ENCODE measurements at regions of chr22 and their contacts with region 1.

Region 1: DNA sequence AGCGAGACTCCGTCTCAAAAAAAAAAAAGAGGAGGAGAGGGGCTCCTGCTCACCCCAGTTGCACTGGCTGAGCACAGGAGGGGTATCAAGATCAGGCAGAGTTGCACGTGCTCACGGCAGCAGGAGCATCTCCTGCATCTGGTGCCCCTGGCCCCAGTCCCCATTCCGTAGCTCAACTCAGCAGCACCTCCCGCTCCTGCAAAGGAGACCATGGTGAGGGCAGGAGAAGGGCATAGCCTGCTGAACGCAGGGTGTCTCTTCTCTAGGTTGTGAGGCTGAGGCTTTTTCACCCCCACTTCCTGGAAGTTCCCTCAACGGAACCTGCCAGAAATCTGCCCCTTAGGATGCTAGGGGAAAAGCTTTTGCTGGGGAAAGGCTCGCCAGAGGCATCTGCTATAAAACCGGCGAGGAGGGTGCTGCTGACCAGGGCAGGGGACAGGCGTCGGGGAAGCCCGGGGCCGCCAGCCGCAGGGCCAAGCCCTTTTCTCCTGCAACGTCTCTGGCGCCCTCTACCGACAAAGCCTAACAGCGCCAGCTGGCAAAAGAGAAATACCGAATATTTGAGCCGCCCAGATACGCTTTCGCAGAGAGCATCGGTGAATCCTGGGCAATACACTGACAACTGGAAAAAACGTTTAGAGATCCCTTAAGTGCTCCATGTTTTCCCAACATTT is 1.0 kb upstream of the PPP6R2 start:
- DNase-seq: peak; percentile 72 to 98 (median 89)

Region 2: GRCh38 chr22:50250555-50251476 is 91.3 kb before region 1 on chr22 and contains the start of gene HDAC10:
- intact Hi-C with region 1: loop called (anchors 5 kb)
- DNase-seq: peak in 3 of 10 donors; percentile 56 to 92 (median 87)

Region 3: DNA sequence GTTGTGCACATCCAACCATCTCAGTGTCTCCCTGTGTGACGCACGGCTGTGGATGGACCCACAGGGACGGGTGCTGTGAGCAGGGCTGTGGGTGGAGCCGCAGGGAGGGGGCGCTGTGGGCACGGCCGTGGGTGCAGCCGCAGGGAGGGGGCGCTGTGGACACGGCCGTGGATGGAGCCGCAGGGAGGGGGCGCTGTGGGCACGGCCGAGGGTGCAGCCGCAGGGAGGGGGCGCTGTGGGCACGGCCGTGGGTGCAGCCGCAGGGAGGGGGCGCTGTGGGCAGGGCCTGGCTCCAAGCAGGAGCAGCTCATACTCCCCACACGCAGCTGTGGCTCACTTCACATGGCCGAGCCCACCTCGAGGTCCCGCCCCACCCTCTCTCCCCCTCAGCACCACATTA is 66.0 kb before region 1 on chr22:
- intact Hi-C with region 1: loop called (anchors 1 kb)
- DNase-seq: peak; percentile 65 to 98 (median 82)

Region 4: DNA sequence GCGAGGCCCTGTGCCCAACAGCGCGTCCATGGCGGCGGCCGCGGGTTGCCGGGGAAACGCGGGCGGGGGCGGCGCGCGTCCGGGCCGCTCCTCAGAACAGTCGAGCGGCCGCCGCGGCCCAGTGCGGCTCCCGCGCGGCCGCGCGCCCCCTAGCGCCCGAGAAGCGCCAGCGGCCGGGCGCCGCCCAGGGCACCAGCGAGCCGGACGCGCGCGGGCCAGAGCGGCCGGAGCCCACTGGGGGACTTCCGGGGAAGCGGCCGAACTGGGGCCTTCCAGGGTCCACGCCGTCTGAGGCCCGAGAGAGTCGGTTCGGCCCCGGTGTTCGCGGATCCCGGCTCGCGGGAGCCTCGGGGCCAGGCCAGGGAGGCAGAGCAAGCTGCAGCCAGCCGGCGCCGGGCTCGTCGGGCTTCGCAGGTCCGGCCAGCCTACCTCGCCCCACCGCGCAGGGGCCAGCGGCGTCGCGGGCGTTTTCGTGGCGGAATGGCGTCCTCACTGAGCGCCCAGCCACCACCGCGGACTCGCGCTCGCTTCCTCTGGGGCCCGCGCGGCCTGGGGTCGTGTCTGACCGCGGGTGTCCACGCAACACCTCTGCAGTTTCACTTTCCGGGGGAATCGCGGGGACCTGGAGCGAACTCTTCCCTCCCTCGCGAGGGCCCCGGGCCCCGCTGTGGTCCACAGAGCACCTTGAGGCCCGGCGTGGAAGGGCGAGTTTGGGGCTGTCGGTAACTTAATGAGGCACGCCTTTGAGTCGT is 15.0 kb before region 1 on chr22 and contains the start of gene DENND6B:
- intact Hi-C with region 1: loop called (anchors 2 kb)
- DNase-seq: peak; percentile 58 to 97 (median 76)

Region 5: GRCh38 chr22:50507991-50508884 is 166.1 kb after region 1 on chr22 and contains the start of gene NCAPH2:
- intact Hi-C with region 1: loop called (anchors 10 kb)
- DNase-seq: peak; percentile 93 to 99 (median 96)